Naive thymus-derived CD4-positive, alpha-beta T cell (primary cell): ENCODE measurements at regions of chr19 and their contacts with region 1.

Region 1: DNA sequence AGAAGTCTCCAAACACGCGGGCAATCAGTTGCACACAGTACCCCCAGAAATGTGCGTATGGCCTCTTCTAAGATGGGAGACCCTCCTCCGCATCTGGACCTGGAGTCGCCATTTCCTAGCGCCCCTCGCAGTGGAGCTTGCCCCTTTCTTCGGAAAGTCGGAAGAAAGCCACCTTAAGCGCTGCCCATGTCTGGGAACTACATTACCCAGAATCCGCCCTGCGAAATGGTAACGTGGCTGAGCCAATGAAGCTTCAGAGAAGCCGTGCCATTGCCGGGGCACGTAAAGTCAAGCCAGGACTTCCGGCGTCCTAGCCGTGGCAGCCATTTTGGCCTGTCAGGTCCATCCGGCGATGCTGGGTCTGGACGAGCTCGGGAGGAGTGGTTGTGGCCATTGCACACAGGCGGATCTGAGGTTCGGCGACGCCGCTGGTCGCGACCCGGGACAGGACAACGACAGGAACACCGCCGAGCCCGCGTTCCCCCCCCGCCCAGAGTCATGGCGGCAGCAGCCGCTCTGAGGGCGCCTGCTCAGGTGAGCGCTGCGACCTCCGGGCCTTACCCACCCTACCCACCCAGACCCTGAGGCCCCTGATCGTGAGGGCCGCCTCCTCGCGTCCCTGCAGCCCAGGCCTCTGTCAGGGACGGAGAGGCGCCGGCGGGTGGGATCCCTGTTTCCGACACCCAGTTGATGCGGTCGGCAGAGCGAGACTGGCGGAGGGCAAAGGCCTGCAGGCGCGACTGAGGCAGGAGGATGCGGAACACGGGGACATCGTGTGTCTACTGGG is at the start of gene ZNF586:
- DNase-seq: peak; percentile 64 to 89 (median 82)
- ATAC-seq: peak; percentile 99
- H3K4me3 ChIP-seq: peak within 1 kb of the TSS; percentile 91
- H3K4me3 Mint-ChIP-seq: peak within 1 kb of the TSS; percentile 90 to 98 (median 96)
- H3K27ac ChIP-seq: peak within 1 kb of the TSS; percentile 86
- H3K27ac Mint-ChIP-seq: peak within 1 kb of the TSS; percentile 79 to 97 (median 94)
- H3K4me1 ChIP-seq: peaks cover 6 to 12% of the 10 kb centered on the region in 2 donors
- H3K4me1 Mint-ChIP-seq: peaks cover 8 to 47% (median 38%) of the 10 kb centered on the region in 7 donors
- H3K27me3 ChIP-seq: no peaks in the 10 kb centered on the region
- H3K27me3 Mint-ChIP-seq: no peaks in the 10 kb centered on the region
- total RNA-seq, gene ZNF586: 16.4 to 47.5 (median 42.6) TPM

Region 2: GRCh38 chr19:57613941-57614743 is 155.4 kb before region 1 on chr19 and contains the start of gene ZNF134:
- CTCF ChIA-PET with region 1: no interaction called
- POLR2A ChIA-PET with region 1: no interaction called
- intact Hi-C with region 1: loop called in 1 of 2 experiments (anchors 1 kb)
- DNase-seq: peak; percentile 74 to 90 (median 84)
- ATAC-seq: peak; percentile 100
- H3K4me3 ChIP-seq: peak within 1 kb of the TSS; percentile 94
- H3K4me3 Mint-ChIP-seq: peak within 1 kb of the TSS; percentile 79 to 95 (median 90)
- H3K27ac ChIP-seq: peak within 1 kb of the TSS; percentile 76
- H3K27ac Mint-ChIP-seq: peak within 1 kb of the TSS; percentile 78 to 92 (median 86)
- H3K4me1 ChIP-seq: peaks cover 14 to 15% of the 10 kb centered on the region in 2 donors
- H3K4me1 Mint-ChIP-seq: peaks cover 18 to 43% (median 34%) of the 10 kb centered on the region in 7 donors
- H3K27me3 ChIP-seq: no peaks in the 10 kb centered on the region
- H3K27me3 Mint-ChIP-seq: no peaks in the 10 kb centered on the region
- total RNA-seq, gene ZNF134: 14.6 to 33.9 (median 25.7) TPM

Region 3: DNA sequence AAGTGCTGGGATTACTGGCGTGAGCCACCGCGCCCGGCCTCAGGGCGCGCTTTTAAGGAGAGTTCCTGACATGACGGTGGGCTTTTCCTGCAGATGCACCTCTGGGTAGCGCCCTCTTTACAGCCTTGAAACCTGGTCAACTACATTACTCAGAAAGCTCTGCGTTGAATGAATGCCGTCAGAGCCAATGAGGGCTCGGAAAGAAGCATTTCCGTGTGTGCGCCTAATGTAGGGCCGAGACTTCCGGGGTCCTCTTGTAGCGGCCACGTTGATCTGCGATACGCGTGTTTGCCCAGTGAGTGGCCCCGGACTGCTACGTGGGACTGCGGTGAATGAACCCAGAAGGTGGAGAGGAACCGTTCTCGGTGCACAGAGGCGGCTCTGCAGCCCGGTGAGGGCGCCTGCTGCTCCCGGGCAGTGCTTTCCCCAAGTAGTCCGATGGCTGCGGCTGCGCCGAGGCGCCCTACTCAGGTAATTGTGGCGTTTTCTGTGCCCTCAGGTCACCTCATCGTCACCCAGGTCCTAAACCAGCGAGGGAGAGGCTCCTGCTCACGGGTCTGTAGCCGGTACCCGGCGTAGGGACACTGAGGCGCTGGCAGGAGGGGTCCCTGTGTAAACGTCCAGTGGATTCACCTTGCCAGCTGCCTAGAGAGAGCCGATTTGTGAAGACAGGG is 50.1 kb after region 1 on chr19:
- CTCF ChIA-PET with region 1: no interaction called
- POLR2A ChIA-PET with region 1: interaction called, 7 read pairs
- intact Hi-C with region 1: loop called (anchors 1 kb)
- DNase-seq: peak; percentile 45 to 85 (median 79)
- ATAC-seq: peak; percentile 89
- H3K4me3 ChIP-seq: peak overlapping the region; percentile 98
- H3K4me3 Mint-ChIP-seq: peak overlapping the region; percentile 95 to 99 (median 98)
- H3K27ac ChIP-seq: peak overlapping the region; percentile 92
- H3K27ac Mint-ChIP-seq: peak overlapping the region; percentile 88 to 99 (median 95)
- H3K4me1 ChIP-seq: peaks cover 0 to 13% of the 10 kb centered on the region in 2 donors
- H3K4me1 Mint-ChIP-seq: peaks cover 38 to 73% (median 67%) of the 10 kb centered on the region in 7 donors
- H3K27me3 ChIP-seq: no peaks in the 10 kb centered on the region
- H3K27me3 Mint-ChIP-seq: no peaks in the 10 kb centered on the region

Region 4: DNA sequence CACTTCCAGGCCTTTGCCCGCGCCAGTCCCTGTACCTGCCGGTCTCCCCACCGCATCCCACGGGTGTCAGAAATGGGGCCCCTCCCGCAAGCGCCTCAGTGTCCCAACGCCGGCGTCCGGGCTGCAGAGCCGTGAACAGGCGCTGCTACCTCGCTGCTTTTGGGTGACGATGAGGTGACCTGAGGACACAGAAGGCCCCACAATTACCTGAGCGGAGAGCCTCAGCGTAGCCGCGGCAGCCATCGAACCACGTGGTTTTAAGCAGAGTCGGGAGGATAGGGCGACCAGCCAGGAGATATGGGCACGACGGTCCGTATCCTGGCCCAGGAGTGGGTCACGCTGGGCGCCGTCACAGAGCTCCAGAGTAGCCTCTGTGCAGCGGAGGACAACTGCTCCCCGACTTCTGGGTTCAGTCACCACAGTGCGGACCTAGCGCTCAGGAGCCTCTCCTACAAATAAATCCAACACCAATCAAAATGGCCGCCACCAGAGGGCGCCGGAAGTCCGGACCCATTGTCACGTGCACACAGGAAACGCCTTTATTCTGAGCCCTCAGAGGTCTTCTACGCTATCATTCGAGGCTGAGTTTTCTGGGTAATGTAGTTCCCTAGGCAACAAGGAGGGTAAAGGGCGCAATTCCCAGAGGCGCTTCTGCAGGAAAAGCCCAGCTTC is 119.2 kb after region 1 on chr19 and contains the start of gene ZNF814:
- CTCF ChIA-PET with region 1: no interaction called
- POLR2A ChIA-PET with region 1: no interaction called
- intact Hi-C with region 1: loop called in 1 of 2 experiments (anchors 1 kb)
- DNase-seq: peak; percentile 61 to 86 (median 81)
- ATAC-seq: peak; percentile 98
- H3K4me3 ChIP-seq: peak within 1 kb of the TSS; percentile 80
- H3K4me3 Mint-ChIP-seq: peak within 1 kb of the TSS; percentile 84 to 95 (median 90)
- H3K27ac ChIP-seq: peak within 1 kb of the TSS; percentile 74
- H3K27ac Mint-ChIP-seq: peak within 1 kb of the TSS; percentile 66 to 92 (median 86)
- H3K4me1 ChIP-seq: no peaks in the 10 kb centered on the region
- H3K4me1 Mint-ChIP-seq: peaks cover 18 to 33% (median 22%) of the 10 kb centered on the region in 7 donors
- H3K27me3 ChIP-seq: no peaks in the 10 kb centered on the region
- H3K27me3 Mint-ChIP-seq: no peaks in the 10 kb centered on the region
- total RNA-seq, gene ZNF814: 12.7 to 56.9 (median 32.7) TPM